Activated B cell treated with CpG ODN at 0.5 μM for 24 hours (primary cell): ENCODE measurements at regions of chr7 and their contacts with region 1.

Region 1: DNA sequence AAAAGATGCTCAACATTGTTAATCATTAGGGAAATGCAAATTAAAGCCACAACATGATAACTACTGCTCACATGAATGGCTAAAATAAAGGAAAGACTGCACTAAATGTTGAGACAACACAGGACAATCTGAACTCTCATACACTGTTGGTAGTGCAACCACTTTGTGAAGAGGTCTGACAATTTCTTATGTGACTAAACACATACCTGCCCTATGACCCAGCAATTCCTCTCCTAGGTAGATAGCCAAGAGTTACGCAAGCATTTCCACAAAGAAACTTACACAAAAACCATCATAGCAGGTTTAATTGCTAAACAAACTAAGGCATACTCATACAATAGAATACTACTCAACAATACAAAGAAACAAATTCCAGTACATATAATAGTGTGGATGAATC is 41.8 kb upstream of the HERPUD2 start:
- DNase-seq: no peak
- ATAC-seq: no peak
- H3K4me3 Mint-ChIP-seq: no peak overlapping the region
- H3K27ac Mint-ChIP-seq: no peak overlapping the region
- H3K4me1 Mint-ChIP-seq: peaks cover 21% of the 10 kb centered on the region
- H3K27me3 Mint-ChIP-seq: no peaks in the 10 kb centered on the region
- CTCF ChIP-seq: no peak

Region 2: DNA sequence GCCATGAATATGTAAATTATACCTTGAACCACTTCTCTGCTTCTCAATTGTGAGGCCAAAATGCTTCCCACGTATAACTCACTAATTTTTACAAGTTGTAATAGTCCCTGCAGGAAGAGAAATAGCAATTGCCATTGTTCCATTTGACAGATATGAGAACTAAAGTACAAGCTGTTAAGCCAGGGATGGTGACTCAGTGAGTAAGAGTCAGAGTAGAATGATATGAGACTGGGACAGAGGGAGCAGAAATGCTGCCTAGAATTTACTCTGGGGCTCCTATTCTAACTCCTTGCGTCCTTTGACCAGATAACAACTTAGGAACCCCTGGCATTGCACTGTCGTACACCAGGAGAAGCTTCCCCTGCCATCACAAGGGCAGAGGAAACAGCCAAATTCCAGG is 19.0 kb after region 1 on chr7:
- CTCF ChIA-PET with region 1: no interaction called
- POLR2A ChIA-PET with region 1: interaction called, 10 read pairs
- intact Hi-C with region 1: no loop called
- DNase-seq: no peak
- ATAC-seq: no peak
- H3K4me3 Mint-ChIP-seq: no peak overlapping the region
- H3K27ac Mint-ChIP-seq: no peak overlapping the region
- H3K4me1 Mint-ChIP-seq: peaks cover 7% of the 10 kb centered on the region
- H3K27me3 Mint-ChIP-seq: no peaks in the 10 kb centered on the region
- CTCF ChIP-seq: no peak

Region 3: GRCh38 chr7:35771776-35772175 is 35.1 kb after region 1 on chr7:
- CTCF ChIA-PET with region 1: no interaction called
- POLR2A ChIA-PET with region 1: no interaction called
- intact Hi-C with region 1: loop called (anchors 5 kb)
- DNase-seq: no peak
- ATAC-seq: no peak
- H3K4me3 Mint-ChIP-seq: no peak overlapping the region
- H3K27ac Mint-ChIP-seq: no peak overlapping the region
- H3K4me1 Mint-ChIP-seq: peaks cover 4% of the 10 kb centered on the region
- H3K27me3 Mint-ChIP-seq: no peaks in the 10 kb centered on the region
- CTCF ChIP-seq: no peak